Dorsolateral prefrontal cortex (tissue), 120 donors: ENCODE measurements at regions of chr10 and their contacts with region 1.

Region 1: GRCh38 chr10:58064714-58065528 is 202.8 kb downstream of the IPMK start:
- DNase-seq: no peak
- H3K4me3 ChIP-seq: peak overlapping the region in 1 of 59 donors; percentile 20
- H3K27ac ChIP-seq: no peak overlapping the region
- H3K27me3 ChIP-seq: peaks cover 0 to 3% (median 0%) of the 10 kb centered on the region in 45 donors
- CTCF ChIP-seq: peak; percentile 51 to 95 (median 77)

Region 2: GRCh38 chr10:57338823-57339558 is 725.9 kb before region 1 on chr10:
- intact Hi-C with region 1: loop called in 1 of 2 experiments (anchors 10 kb)
- DNase-seq: no peak
- H3K4me3 ChIP-seq: no peak overlapping the region
- H3K27ac ChIP-seq: no peak overlapping the region
- H3K27me3 ChIP-seq: no peaks in the 10 kb centered on the region
- CTCF ChIP-seq: peak; percentile 52 to 86 (median 78)

Region 3: GRCh38 chr10:57579926-57580325 is 485.0 kb before region 1 on chr10:
- intact Hi-C with region 1: loop called in 1 of 2 experiments (anchors 2 kb)
- DNase-seq: no peak
- H3K4me3 ChIP-seq: no peak overlapping the region
- H3K27ac ChIP-seq: no peak overlapping the region
- H3K27me3 ChIP-seq: no peaks in the 10 kb centered on the region
- CTCF ChIP-seq: peak in 51 of 56 donors; percentile 19 to 65 (median 47)

Region 4: GRCh38 chr10:57716886-57717285 is 348.0 kb before region 1 on chr10:
- intact Hi-C with region 1: loop called in 1 of 2 experiments (anchors 5 kb)
- DNase-seq: no peak
- H3K4me3 ChIP-seq: no peak overlapping the region
- H3K27ac ChIP-seq: no peak overlapping the region
- H3K27me3 ChIP-seq: peaks cover 0 to 3% (median 0%) of the 10 kb centered on the region in 45 donors
- CTCF ChIP-seq: peak in 33 of 56 donors; percentile 7 to 52 (median 31)